ENCODE measurements at regions of chr14 and their contacts with region 1.

Region 1: DNA sequence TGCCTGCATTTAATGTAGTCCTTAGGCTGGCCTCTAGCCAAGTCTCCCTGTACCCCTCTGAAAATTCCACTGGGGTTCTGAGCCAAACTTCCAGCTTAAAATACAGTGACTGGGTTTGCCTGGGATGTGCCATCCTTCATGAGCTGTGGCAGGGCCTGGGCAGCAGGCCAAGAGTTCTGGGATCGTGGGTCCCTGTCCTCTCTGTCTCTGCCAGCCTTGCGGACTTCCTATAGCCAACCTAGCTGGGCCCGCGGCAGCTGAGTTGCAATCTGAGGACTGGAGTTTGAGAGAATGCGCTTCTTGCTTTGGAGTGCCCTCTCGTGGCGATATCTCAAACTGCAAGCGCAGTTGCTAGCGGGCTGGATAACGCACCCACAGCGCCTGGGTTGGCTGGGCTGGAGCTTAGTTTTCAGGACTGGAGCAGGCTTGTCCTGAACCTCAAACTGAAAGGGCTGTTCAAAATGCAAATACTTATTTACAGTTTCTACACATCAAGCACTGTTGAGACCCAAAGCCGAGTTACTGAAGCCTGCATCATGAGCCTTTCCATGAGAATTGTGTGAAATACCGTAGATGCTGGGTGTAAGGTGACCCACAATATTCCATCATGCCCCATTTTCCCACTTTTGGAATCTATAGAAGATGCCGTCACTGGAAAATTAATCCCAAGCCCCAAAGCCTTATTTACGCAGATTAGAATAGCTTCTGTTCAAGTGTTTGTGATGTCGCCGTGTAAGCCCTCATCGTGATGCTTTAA is 7.3 kb upstream of the IFI27L2 start:
- DNase-seq: peak; percentile 93
- H3K4me3 Mint-ChIP-seq: no peak overlapping the region
- H3K27ac Mint-ChIP-seq: no peak overlapping the region
- H3K4me1 Mint-ChIP-seq: peaks cover 3% of the 10 kb centered on the region
- H3K27me3 Mint-ChIP-seq: no peaks in the 10 kb centered on the region

Region 2: DNA sequence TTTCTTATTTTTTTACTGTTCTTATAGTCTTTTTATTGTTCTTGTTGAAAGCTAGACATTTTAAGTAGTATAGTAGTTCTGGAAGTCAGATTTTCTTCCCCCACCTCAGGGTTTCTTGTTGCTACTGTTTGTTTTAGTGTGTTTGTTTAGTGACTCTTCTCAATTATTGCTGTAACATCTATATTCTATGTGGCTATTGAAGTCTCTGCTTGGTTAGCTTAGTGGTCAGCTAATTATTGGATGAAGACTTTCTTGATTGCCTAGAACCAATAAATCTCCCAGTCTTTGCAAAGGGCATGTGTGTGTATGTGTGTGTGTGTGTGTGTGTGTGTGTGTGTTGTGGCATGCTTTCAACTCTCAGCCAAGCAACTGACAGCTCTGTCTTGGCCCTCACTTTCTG is 740.3 kb before region 1 on chr14:
- CTCF ChIA-PET with region 1: no interaction called
- POLR2A ChIA-PET with region 1: no interaction called
- intact Hi-C with region 1: no loop called
- DNase-seq: no peak
- H3K4me3 Mint-ChIP-seq: no peak overlapping the region
- H3K27ac Mint-ChIP-seq: no peak overlapping the region
- H3K4me1 Mint-ChIP-seq: no peaks in the 10 kb centered on the region
- H3K27me3 Mint-ChIP-seq: peaks cover 25% of the 10 kb centered on the region

Region 3: GRCh38 chr14:93939304-93940229 is 197.2 kb before region 1 on chr14:
- CTCF ChIA-PET with region 1: interaction called, 43 read pairs
- POLR2A ChIA-PET with region 1: no interaction called
- intact Hi-C with region 1: no loop called
- DNase-seq: peak; percentile 94
- H3K4me3 Mint-ChIP-seq: peak overlapping the region; percentile 61
- H3K27ac Mint-ChIP-seq: peak overlapping the region; percentile 56
- H3K4me1 Mint-ChIP-seq: peaks cover 13% of the 10 kb centered on the region
- H3K27me3 Mint-ChIP-seq: no peaks in the 10 kb centered on the region

Region 4: DNA sequence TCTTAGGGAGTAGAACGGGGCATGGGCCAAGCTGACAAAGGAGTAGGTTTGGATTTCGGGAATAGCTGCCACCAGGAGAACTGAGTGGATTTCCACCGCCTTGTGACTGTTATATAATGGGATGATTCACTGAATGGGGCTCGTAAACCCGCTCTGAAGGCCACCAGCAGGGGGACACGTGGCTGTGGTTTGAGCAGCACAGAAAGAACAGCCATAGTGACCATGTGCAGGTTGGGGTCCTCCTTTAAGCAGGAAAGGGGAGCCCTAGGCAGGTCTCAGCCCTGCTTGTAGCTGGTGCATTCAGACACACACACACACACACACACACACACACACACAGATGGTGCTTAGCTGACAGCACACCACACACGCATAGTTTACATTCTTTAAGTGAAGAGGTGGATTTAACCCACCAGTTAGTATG is 151.8 kb before region 1 on chr14:
- CTCF ChIA-PET with region 1: no interaction called
- POLR2A ChIA-PET with region 1: no interaction called
- intact Hi-C with region 1: no loop called
- DNase-seq: no peak
- H3K4me3 Mint-ChIP-seq: no peak overlapping the region
- H3K27ac Mint-ChIP-seq: no peak overlapping the region
- H3K4me1 Mint-ChIP-seq: peaks cover 20% of the 10 kb centered on the region
- H3K27me3 Mint-ChIP-seq: no peaks in the 10 kb centered on the region

Region 5: GRCh38 chr14:94036313-94037050 is 100.3 kb before region 1 on chr14:
- CTCF ChIA-PET with region 1: interaction called, 187 read pairs
- POLR2A ChIA-PET with region 1: interaction called, 4 read pairs
- intact Hi-C with region 1: loop called (anchors 1 kb)
- DNase-seq: peak; percentile 88
- H3K4me3 Mint-ChIP-seq: no peak overlapping the region
- H3K27ac Mint-ChIP-seq: no peak overlapping the region
- H3K4me1 Mint-ChIP-seq: peaks cover 3% of the 10 kb centered on the region
- H3K27me3 Mint-ChIP-seq: no peaks in the 10 kb centered on the region

Region 6: DNA sequence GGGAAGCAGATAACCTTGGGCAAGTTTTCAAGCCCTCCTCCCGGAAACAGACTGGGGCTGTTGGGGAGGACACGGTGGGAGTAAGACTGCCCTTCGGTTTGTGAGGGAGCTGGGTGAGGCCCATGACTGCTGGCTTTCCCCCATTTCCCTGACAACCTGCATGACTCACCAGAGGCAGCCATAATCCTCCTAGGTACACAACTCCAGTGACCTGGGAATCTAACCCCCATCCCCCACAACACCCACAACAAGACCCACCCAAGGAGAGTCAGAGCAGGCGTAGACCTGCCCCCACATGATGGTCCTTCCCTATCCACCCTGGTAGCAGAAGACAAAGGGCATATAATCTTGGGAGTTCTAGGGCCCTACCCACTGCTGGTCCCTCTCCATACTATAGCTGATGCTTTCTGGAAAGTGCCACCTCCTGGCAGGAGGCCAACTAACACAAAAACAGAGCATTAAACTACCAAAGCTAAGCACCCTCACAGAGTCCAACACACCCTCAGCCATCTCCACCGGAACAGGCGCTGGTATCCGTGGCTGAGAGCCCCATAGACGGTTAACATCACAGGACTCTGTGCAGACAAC is 70.6 kb before region 1 on chr14:
- CTCF ChIA-PET with region 1: interaction called, 10 read pairs
- POLR2A ChIA-PET with region 1: no interaction called
- intact Hi-C with region 1: no loop called
- DNase-seq: no peak
- H3K4me3 Mint-ChIP-seq: no peak overlapping the region
- H3K27ac Mint-ChIP-seq: peak overlapping the region; percentile 68
- H3K4me1 Mint-ChIP-seq: peaks cover 80% of the 10 kb centered on the region
- H3K27me3 Mint-ChIP-seq: no peaks in the 10 kb centered on the region

Region 7: GRCh38 chr14:94173885-94174603 is 37.3 kb after region 1 on chr14 and contains the start of gene PPP4R4:
- CTCF ChIA-PET with region 1: interaction called, 82 read pairs
- POLR2A ChIA-PET with region 1: no interaction called
- intact Hi-C with region 1: no loop called
- DNase-seq: peak; percentile 95
- H3K4me3 Mint-ChIP-seq: peak within 1 kb of the TSS; percentile 79
- H3K27ac Mint-ChIP-seq: peak within 1 kb of the TSS; percentile 73
- H3K4me1 Mint-ChIP-seq: peaks cover 39% of the 10 kb centered on the region
- H3K27me3 Mint-ChIP-seq: no peaks in the 10 kb centered on the region
- total RNA-seq, gene PPP4R4: 17.0 to 19.2 TPM

Region 8: GRCh38 chr14:94485944-94486841 is 349.4 kb after region 1 on chr14:
- CTCF ChIA-PET with region 1: interaction called, 34 read pairs
- POLR2A ChIA-PET with region 1: no interaction called
- intact Hi-C with region 1: loop called (anchors 1 kb)
- DNase-seq: peak; percentile 57
- H3K4me3 Mint-ChIP-seq: no peak overlapping the region
- H3K27ac Mint-ChIP-seq: no peak overlapping the region
- H3K4me1 Mint-ChIP-seq: peaks cover 15% of the 10 kb centered on the region
- H3K27me3 Mint-ChIP-seq: peaks cover 13% of the 10 kb centered on the region